Panc1 (cell line): ENCODE measurements at regions of chr20 and their contacts with region 1.

Region 1: GRCh38 chr20:57964011-57964862 is 254.4 kb upstream of the PMEPA1 start:
- DNase-seq: no peak
- ATAC-seq: no peak
- H3K4me3 ChIP-seq: no peak overlapping the region
- H3K27ac ChIP-seq: no peak overlapping the region
- H3K4me1 ChIP-seq: no peaks in the 10 kb centered on the region
- H3K27me3 ChIP-seq: no peaks in the 10 kb centered on the region
- CTCF ChIP-seq: no peak

Region 2: DNA sequence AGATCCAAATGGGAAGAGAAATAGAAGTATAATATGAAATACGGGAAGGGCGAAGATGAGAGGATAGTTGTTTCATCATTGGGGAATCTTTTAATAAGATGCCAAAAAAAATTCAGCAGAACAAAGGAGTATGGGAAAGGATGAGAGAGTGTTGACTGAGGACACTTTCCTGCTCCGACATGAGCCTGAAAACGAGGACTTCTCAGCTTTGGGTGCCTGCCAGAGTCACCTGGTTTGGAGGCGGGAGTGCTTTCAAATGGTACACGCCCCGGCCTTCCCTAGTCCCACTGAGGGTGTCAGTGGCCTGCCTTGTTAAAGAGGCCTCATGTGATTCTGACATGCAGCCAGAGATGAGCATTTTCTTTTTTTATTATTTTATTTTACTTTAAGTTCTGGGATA is 13.3 kb after region 1 on chr20:
- CTCF ChIA-PET with region 1: interaction called, 10 read pairs
- POLR2A ChIA-PET with region 1: no interaction called
- in situ Hi-C with region 1: no loop called
- intact Hi-C with region 1: no loop called
- DNase-seq: no peak
- ATAC-seq: no peak
- H3K4me3 ChIP-seq: no peak overlapping the region
- H3K27ac ChIP-seq: no peak overlapping the region
- H3K4me1 ChIP-seq: no peaks in the 10 kb centered on the region
- H3K27me3 ChIP-seq: no peaks in the 10 kb centered on the region
- CTCF ChIP-seq: no peak